ENCODE measurements at regions of chr3 and their contacts with region 1.

Region 1: DNA sequence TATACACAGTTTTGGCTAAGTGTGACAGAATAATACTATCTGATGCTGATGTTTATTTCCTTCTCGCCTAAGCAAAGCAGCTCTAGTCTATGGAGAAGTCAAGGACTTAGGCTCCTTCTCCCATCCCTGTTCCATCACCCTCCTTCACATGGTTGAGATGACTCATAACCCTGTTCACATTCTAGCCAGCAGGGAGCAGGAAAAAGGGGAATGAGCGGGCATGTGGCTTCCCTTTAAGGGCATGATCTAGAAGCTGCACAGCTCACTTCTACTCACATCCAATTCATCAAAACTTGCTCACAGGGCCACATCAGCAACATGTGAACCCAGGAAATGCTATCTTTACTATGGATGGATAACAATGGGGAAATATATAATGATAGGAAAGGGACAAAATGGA is 40.9 kb downstream of the CBLB start:
- DNase-seq: peak; percentile 63
- H3K4me3 ChIP-seq: no peak overlapping the region
- H3K27ac ChIP-seq: peak overlapping the region in 2 of 4 donors; percentile 11 to 35
- H3K4me1 ChIP-seq: peaks cover 0 to 27% (median 18%) of the 10 kb centered on the region in 4 donors
- H3K27me3 ChIP-seq: no peaks in the 10 kb centered on the region
- CTCF ChIP-seq: peak in 2 of 4 experiments; percentile 18 to 22
- EP300 ChIP-seq: no peak
- POLR2A ChIP-seq: no peak

Region 2: GRCh38 chr3:105791919-105792786 is 35.8 kb before region 1 on chr3:
- intact Hi-C with region 1: loop called (anchors 5 kb)
- DNase-seq: peak; percentile 93
- H3K4me3 ChIP-seq: no peak overlapping the region
- H3K27ac ChIP-seq: peak overlapping the region in 3 of 4 donors; percentile 21 to 71 (median 56)
- H3K4me1 ChIP-seq: peaks cover 0 to 13% (median 5%) of the 10 kb centered on the region in 4 donors
- H3K27me3 ChIP-seq: no peaks in the 10 kb centered on the region
- CTCF ChIP-seq: no peak
- EP300 ChIP-seq: peak; percentile 43 to 82 (median 74)
- POLR2A ChIP-seq: no peak

Measured in sigmoid colon (tissue), 7 donors.